ENCODE measurements at regions of chr14 and their contacts with region 1.

Region 1: GRCh38 chr14:105709281-105710118 is 183.1 kb downstream of the TMEM121 start:
- DNase-seq: no peak
- ATAC-seq: no peak
- H3K4me3 ChIP-seq: no peak overlapping the region
- H3K27ac ChIP-seq: no peak overlapping the region; the same call in 2 of the 3 replicates
- H3K4me1 ChIP-seq: peaks cover 0 to 7% of the 10 kb centered on the region in 2 experiments; a peak in 2 of 5 replicates
- H3K27me3 ChIP-seq: no peaks in the 10 kb centered on the region
- CTCF ChIP-seq: no peak
- EP300 ChIP-seq: no peak
- POLR2A ChIP-seq: no peak
- RAD21 ChIP-seq: no peak

Region 2: DNA sequence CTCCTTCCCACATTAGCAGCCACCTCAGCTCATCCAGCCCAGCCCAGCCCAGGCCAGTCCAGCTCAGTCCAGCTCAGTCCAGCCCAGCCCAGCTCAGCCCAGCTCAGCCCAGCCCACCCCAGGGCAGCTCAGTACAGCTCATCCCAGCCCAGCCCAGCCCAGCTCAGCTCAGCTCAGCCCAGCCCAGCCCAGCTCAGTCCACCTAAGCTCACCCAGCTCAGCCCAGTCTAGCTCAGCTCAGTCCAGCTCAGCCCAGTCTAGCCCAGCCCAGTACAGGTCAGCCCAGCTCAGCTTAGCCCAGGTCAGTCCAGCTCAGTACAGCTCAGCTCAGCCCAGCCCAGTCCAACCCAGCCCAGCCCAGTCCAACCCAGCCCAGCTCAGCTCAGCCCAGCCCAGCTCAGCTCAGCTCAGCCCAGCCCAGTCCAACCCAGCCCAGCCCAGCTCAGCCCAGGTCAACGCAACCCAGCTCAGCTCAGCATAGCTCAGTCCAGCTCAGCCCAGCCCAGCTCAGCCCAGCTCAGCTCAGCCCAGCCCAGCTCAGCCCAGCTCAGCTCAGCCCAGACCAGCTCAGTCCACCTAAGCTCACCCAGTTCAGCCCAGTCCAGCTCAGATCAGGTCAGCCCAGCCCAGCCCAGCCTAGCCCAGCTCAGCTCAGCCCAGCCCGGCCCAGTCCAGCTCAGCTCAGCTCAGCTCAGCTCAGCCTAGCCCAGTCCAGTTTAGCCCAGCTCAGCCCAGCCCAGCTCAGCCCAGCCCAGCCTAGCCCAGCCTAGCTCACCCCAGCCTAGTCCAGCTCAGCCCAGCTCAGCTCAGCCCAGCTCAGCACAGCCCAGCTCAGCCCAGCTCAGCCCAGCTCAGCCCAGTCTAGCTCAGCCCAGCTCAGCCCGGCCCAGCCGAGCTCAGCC is 120.1 kb before region 1 on chr14:
- CTCF ChIA-PET with region 1: no interaction called
- POLR2A ChIA-PET with region 1: no interaction called
- in situ Hi-C with region 1: loop called (anchors 5 kb)
- intact Hi-C with region 1: loop called (anchors 5 kb)
- DNase-seq: no peak
- ATAC-seq: no peak
- H3K4me3 ChIP-seq: no peak overlapping the region
- H3K27ac ChIP-seq: no peak overlapping the region
- H3K4me1 ChIP-seq: peaks cover 0 to 13% of the 10 kb centered on the region in 2 experiments; a peak in 2 of 5 replicates
- H3K27me3 ChIP-seq: no peaks in the 10 kb centered on the region
- CTCF ChIP-seq: no peak
- EP300 ChIP-seq: no peak
- POLR2A ChIP-seq: no peak
- RAD21 ChIP-seq: no peak

Region 3: GRCh38 chr14:105690692-105691091 is 18.8 kb before region 1 on chr14:
- CTCF ChIA-PET with region 1: no interaction called
- POLR2A ChIA-PET with region 1: no interaction called
- in situ Hi-C with region 1: no loop called
- intact Hi-C with region 1: no loop called
- DNase-seq: no peak
- ATAC-seq: no peak
- H3K4me3 ChIP-seq: no peak overlapping the region
- H3K27ac ChIP-seq: no peak overlapping the region
- H3K4me1 ChIP-seq: no peaks in the 10 kb centered on the region
- H3K27me3 ChIP-seq: no peaks in the 10 kb centered on the region
- CTCF ChIP-seq: no peak
- EP300 ChIP-seq: no peak
- POLR2A ChIP-seq: no peak
- RAD21 ChIP-seq: no peak